HepG2 (cell line): ENCODE measurements at regions of chr9 and their contacts with region 1.

Region 1: DNA sequence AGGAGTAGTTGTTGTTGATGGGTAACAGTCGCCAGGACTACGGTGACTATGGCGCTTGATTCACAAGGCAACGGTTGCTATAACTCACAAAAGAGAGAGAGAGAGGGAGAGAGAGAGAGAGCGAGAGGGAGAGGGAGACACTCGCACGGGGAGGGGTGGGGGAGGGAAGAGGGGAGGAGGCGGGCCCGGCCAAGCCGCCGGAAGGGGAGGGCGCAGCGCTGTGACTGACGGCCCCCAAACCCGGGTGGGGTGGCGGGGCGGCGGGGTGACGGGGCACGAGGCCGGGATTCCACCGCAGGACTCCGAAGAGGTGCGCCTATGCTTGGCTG is at the start of gene RFX3:
- DNase-seq: peak; percentile 91
- ATAC-seq: peak; percentile 81
- H3K4me3 ChIP-seq: peak within 1 kb of the TSS; percentile 77 to 99 (median 79)
- H3K27ac ChIP-seq: peak within 1 kb of the TSS; percentile 100
- H3K4me1 ChIP-seq: peaks cover 52% of the 10 kb centered on the region
- H3K27me3 ChIP-seq: no peaks in the 10 kb centered on the region; a peak in 1 of 5 replicates
- CTCF ChIP-seq: no peak
- EP300 ChIP-seq: peak in 1 of 2 experiments; percentile 55; a peak in 3 of 4 replicates
- POLR2A ChIP-seq: no peak; a peak in 1 of 4 replicates
- RAD21 ChIP-seq: no peak
- total RNA-seq, gene RFX3: 2.7 and 3.0 TPM in 2 replicates

Region 2: DNA sequence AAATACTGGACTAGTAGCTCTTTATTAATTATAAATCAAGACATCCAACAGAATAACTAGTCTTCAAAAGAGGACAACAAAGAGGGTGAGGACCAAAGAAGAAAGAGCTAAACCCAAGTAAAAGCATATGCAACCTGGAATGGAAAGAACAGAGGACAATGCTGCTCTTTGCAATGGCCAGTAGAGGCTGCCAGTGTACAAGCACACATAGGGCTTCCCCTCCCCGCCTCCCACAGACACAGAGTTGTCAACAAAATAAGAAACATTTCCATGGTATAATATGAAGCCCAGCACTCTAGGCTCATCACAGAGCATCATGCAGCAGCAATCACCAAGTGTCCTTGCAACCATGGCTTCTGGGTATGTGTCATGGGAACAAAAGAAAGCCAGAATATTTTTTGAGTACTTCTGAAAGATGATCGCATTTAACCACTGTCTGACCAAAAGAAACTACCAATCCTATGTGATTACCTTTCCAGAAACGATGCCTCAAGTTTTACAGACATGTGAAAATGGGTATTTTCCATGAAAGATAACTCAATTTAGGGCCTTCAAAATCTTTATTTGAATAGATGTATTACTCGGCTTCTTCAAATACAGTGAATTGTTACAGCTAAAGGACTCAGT is 58.1 kb before region 1 on chr9:
- CTCF ChIA-PET with region 1: no interaction called
- POLR2A ChIA-PET with region 1: interaction called, 4 read pairs
- in situ Hi-C with region 1: no loop called
- intact Hi-C with region 1: loop called (anchors 5 kb)
- DNase-seq: peak; percentile 63
- ATAC-seq: peak; percentile 100
- H3K4me3 ChIP-seq: no peak overlapping the region
- H3K27ac ChIP-seq: no peak overlapping the region
- H3K4me1 ChIP-seq: no peaks in the 10 kb centered on the region
- H3K27me3 ChIP-seq: no peaks in the 10 kb centered on the region
- CTCF ChIP-seq: peak; percentile 85
- EP300 ChIP-seq: no peak
- POLR2A ChIP-seq: no peak
- RAD21 ChIP-seq: peak; percentile 63; the same call in 1 of the 2 replicates

Region 3: GRCh38 chr9:3478549-3478953 is 47.2 kb before region 1 on chr9:
- CTCF ChIA-PET with region 1: no interaction called
- POLR2A ChIA-PET with region 1: interaction called, 11 read pairs
- in situ Hi-C with region 1: no loop called
- intact Hi-C with region 1: no loop called
- DNase-seq: peak; percentile 9
- ATAC-seq: no peak
- H3K4me3 ChIP-seq: no peak overlapping the region
- H3K27ac ChIP-seq: no peak overlapping the region
- H3K4me1 ChIP-seq: peaks cover 17% of the 10 kb centered on the region
- H3K27me3 ChIP-seq: no peaks in the 10 kb centered on the region
- CTCF ChIP-seq: no peak
- EP300 ChIP-seq: no peak
- POLR2A ChIP-seq: no peak
- RAD21 ChIP-seq: no peak

Region 4: DNA sequence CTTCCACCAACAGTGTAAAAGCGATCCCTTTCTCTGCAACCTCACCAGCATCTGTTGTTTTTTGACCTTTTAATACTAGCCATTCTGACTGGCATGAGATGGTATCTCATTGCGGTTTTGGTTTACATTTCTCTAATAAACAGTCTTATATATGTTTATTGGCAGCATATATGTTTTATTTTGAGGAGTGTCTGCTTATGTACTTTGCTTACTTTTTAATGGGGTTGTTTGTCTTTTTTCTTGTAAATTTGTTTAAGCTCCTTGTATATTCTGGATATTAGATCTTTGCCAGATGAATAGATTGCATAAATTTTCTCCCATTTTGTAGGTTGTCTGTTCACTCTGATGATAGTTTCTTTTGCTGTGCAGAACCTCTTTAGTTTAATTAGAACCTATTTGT is 88.9 kb after region 1 on chr9:
- CTCF ChIA-PET with region 1: no interaction called
- POLR2A ChIA-PET with region 1: no interaction called
- in situ Hi-C with region 1: no loop called
- intact Hi-C with region 1: no loop called
- DNase-seq: no peak
- ATAC-seq: no peak
- H3K4me3 ChIP-seq: no peak overlapping the region
- H3K27ac ChIP-seq: no peak overlapping the region
- H3K4me1 ChIP-seq: no peaks in the 10 kb centered on the region
- H3K27me3 ChIP-seq: no peaks in the 10 kb centered on the region
- CTCF ChIP-seq: no peak
- EP300 ChIP-seq: no peak
- POLR2A ChIP-seq: no peak
- RAD21 ChIP-seq: no peak

Region 5: DNA sequence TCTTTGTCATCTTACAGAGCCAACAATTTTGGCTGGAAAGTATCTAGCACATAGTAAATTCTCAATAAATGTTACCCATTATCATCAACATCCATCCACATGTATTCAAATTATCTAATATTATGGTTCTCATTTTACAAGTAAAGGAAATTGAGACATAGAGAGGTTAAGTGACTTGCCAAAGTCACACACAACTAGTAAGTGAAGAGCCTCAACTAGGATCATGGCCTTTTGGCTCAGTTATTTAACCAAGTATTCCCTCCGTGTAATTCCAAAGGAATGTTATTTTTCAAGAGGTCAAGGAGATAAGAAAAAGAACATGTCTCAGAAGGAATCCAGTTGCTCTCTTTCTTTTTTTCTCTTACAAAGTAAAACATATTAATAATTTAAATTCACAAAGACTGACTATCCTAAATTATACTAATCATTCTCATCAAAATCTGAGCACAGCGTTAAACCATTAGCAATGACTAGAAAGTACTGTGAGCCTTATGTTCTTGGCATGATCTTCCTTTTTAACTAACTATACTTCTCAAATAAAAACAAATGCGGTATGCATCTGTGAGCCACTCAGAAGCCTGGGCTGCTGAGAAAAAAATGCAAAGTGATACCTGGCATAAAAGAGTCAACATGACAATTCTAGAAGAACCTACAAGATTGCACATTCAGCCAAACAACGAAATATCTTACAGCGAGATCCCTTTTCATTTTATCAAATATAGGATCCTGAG is 423.2 kb after region 1 on chr9:
- CTCF ChIA-PET with region 1: no interaction called
- POLR2A ChIA-PET with region 1: no interaction called
- in situ Hi-C with region 1: no loop called
- intact Hi-C with region 1: no loop called
- DNase-seq: no peak
- ATAC-seq: no peak
- H3K4me3 ChIP-seq: no peak overlapping the region
- H3K27ac ChIP-seq: no peak overlapping the region
- H3K4me1 ChIP-seq: no peaks in the 10 kb centered on the region
- H3K27me3 ChIP-seq: no peaks in the 10 kb centered on the region
- CTCF ChIP-seq: no peak
- EP300 ChIP-seq: no peak
- POLR2A ChIP-seq: no peak
- RAD21 ChIP-seq: no peak

Region 6: DNA sequence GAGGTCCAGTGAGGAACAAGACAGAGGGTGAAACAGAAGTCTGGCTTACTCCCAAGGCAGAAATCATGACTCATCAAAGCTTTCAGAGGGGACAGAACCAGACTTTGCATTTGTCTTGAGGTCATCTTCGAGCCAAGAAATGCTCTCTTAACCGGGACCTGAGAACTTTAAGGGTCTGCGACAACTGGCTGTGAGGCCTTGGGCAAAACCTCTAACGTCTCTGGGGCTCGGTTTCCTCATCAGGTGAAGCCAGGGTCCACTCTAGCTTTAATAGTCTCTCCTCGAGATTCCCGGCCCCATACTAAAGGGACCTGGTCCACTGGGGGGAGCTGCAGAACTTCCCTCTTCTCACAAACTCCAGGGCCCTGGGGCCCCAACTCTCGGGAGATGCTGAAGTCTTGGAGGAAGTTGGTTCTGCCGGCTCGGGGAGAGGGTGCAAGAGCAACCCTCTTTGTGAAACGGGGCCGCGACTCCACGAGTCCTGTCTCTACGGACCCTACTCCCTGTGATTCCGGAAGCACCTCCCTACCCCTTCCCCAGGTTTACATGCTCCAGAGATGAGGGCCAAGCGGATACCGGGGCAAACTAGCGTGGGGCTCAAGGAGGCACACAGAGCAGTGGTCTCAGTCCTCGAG is 771.5 kb after region 1 on chr9:
- CTCF ChIA-PET with region 1: no interaction called
- POLR2A ChIA-PET with region 1: no interaction called
- in situ Hi-C with region 1: no loop called
- intact Hi-C with region 1: loop called (anchors 10 kb)
- DNase-seq: peak; percentile 57
- ATAC-seq: peak; percentile 78
- H3K4me3 ChIP-seq: peak overlapping the region; percentile 67 to 79 (median 69)
- H3K27ac ChIP-seq: no peak overlapping the region
- H3K4me1 ChIP-seq: peaks cover 21% of the 10 kb centered on the region
- H3K27me3 ChIP-seq: peaks cover 10 to 24% of the 10 kb centered on the region in 2 experiments; a peak in 4 of 5 replicates
- CTCF ChIP-seq: peak; percentile 60
- EP300 ChIP-seq: no peak
- POLR2A ChIP-seq: no peak
- RAD21 ChIP-seq: peak; percentile 37; the same call in 1 of the 2 replicates

Region 7: GRCh38 chr9:4679268-4680172 is 1153.7 kb after region 1 on chr9 and contains the start of gene CDC37L1:
- CTCF ChIA-PET with region 1: no interaction called
- POLR2A ChIA-PET with region 1: interaction called, 4 read pairs
- in situ Hi-C with region 1: no loop called
- intact Hi-C with region 1: loop called (anchors 5 kb)
- DNase-seq: peak; percentile 91
- ATAC-seq: peak; percentile 93
- H3K4me3 ChIP-seq: peak within 1 kb of the TSS; percentile 79 to 94 (median 87)
- H3K27ac ChIP-seq: peak within 1 kb of the TSS; percentile 99
- H3K4me1 ChIP-seq: peaks cover 48% of the 10 kb centered on the region
- H3K27me3 ChIP-seq: no peaks in the 10 kb centered on the region; a peak in 1 of 5 replicates
- CTCF ChIP-seq: peak; percentile 72
- EP300 ChIP-seq: peak; percentile 16 to 17; a peak in 2 of 4 replicates
- POLR2A ChIP-seq: peak; percentile 93 to 95
- RAD21 ChIP-seq: peak; percentile 63
- total RNA-seq, gene CDC37L1: 17.0 and 21.6 TPM in 2 replicates